ENCODE measurements at regions of chr19 and their contacts with region 1.

Region 1: GRCh38 chr19:4328243-4328990 is 10.2 kb downstream of the STAP2 start:
- DNase-seq: peak; percentile 89 to 98
- ATAC-seq: peak; percentile 94 to 96 (median 96)
- H3K4me3 ChIP-seq: peak overlapping the region; percentile 10 to 59 (median 47)
- H3K27ac ChIP-seq: peak overlapping the region in 1 of 10 donors; percentile 42
- H3K4me1 ChIP-seq: peaks cover 0 to 24% (median 21%) of the 10 kb centered on the region in 9 donors
- H3K27me3 ChIP-seq: peaks cover 0 to 16% (median 0%) of the 10 kb centered on the region in 7 donors
- CTCF ChIP-seq: no peak

Region 2: GRCh38 chr19:4278419-4279266 is 49.8 kb before region 1 on chr19 and contains the start of gene SHD:
- intact Hi-C with region 1: loop called in 1 of 10 experiments (anchors 10 kb)
- DNase-seq: no peak
- ATAC-seq: peak in 2 of 8 donors; percentile 30 to 38
- H3K4me3 ChIP-seq: peak within 1 kb of the TSS in 9 of 10 donors; percentile 22 to 51 (median 44)
- H3K27ac ChIP-seq: no peak within 1 kb of the TSS
- H3K4me1 ChIP-seq: peaks cover 0 to 18% (median 13%) of the 10 kb centered on the region in 9 donors
- H3K27me3 ChIP-seq: peaks cover 19 to 64% (median 54%) of the 10 kb centered on the region in 7 donors
- CTCF ChIP-seq: no peak
- total RNA-seq, gene SHD: 0.17 to 0.37 (median 0.30) TPM in 3 of 10 donors, not detected in the others